ENCODE measurements at regions of chr3 and their contacts with region 1.

Region 1: DNA sequence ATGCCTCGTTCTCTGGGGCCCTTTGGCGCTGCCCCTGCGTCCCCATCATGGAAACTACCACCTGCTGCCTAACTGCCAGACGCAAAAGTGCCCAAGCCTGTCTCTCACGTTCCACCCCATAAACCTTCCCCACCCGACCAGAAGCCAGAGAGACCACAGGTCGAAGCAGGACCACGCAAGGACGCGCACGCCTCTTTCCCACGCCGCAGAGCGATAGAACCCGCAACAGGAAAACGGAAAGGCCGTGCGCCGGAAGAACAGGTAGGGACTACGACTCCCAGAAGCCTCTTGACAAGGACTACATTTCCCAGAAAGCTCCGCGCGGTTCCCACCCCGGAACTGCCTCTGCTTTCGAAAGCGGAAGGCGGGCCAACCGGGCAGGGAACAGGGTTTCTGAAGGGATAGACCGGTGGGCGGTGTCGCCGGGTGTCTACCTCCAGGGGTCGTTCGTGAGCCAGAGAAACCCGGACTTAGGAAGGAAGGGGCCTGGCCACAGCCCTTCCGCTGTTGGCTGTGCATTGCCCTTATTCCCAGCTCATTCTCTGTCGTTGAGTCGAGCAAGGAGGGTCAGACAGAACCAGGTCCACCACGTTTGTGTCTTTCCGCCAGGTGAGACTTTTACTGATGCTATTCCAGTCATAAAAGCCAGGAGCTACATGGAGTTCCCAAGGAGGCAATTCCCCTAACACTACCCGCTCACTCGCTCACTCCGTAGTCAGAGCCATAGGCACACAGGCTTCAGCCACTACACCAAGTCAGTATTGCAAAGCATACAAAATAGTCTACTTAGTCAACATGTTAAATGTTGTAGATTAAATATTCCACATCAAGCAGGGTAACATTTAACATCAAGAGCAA is 56.6 kb upstream of the ZBTB38 start:
- DNase-seq: peak; percentile 88 to 98 (median 97)
- ATAC-seq: peak; percentile 97
- H3K4me3 ChIP-seq: peak overlapping the region; percentile 80
- H3K4me3 Mint-ChIP-seq: peak overlapping the region; percentile 89 to 99 (median 97)
- H3K27ac ChIP-seq: peak overlapping the region; percentile 77
- H3K27ac Mint-ChIP-seq: peak overlapping the region; percentile 91 to 99 (median 97)
- H3K4me1 ChIP-seq: peaks cover 31 to 43% of the 10 kb centered on the region in 2 donors
- H3K4me1 Mint-ChIP-seq: peaks cover 38 to 71% (median 61%) of the 10 kb centered on the region in 7 donors
- H3K27me3 ChIP-seq: no peaks in the 10 kb centered on the region
- H3K27me3 Mint-ChIP-seq: no peaks in the 10 kb centered on the region

Region 2: GRCh38 chr3:140629357-140630139 is 682.2 kb before region 1 on chr3:
- CTCF ChIA-PET with region 1: no interaction called
- POLR2A ChIA-PET with region 1: no interaction called
- intact Hi-C with region 1: no loop called
- DNase-seq: no peak
- ATAC-seq: no peak
- H3K4me3 ChIP-seq: no peak overlapping the region
- H3K4me3 Mint-ChIP-seq: no peak overlapping the region
- H3K27ac ChIP-seq: no peak overlapping the region
- H3K27ac Mint-ChIP-seq: no peak overlapping the region
- H3K4me1 ChIP-seq: no peaks in the 10 kb centered on the region
- H3K4me1 Mint-ChIP-seq: no peaks in the 10 kb centered on the region
- H3K27me3 ChIP-seq: no peaks in the 10 kb centered on the region
- H3K27me3 Mint-ChIP-seq: no peaks in the 10 kb centered on the region

Region 3: DNA sequence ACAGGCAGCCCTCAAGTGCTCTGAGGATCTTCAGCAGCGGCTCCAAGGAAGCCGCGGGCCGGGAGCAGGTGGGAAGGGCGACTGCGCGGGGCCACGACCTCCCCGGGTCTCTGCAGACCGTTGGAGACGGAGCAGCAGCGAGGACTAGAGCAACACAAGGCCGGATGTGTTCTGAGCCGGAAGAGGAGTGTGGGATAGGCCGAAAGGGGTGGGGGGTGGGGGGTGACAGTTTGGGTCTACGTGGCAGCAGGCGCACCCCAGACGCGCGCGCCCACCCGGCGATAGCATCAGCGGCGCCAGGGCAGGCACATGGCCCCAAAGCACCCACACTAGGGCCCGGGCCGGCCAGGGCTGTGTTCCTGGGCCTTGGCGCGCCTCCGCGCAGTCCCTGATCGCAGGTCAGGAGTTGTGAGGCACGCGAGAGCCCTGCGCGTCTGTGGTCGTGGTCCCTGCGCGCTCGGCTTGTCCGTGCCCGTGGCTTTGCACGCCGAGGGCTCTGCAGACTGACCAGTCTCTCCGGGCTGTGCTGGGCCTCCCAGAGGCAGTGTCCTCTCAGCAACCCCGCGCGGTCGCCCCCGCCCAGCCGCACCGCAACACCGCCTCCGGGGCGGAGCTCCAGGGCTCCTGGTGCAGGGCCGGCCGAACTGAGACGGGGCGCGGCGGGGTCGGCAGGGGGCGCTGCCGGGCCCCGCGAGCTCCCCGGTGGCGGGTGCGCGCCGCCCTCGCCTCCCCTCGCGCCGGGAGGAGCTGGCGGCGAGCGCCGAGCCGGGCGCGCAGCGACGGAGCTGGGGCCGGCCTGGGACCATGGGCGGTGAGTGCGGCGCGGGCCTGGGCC is 80.4 kb before region 1 on chr3 and contains the start of gene PXYLP1:
- CTCF ChIA-PET with region 1: interaction called, 76 read pairs
- POLR2A ChIA-PET with region 1: interaction called, 58 read pairs
- intact Hi-C with region 1: loop called (anchors 1 kb)
- DNase-seq: peak; percentile 83 to 97 (median 91)
- ATAC-seq: peak; percentile 98
- H3K4me3 ChIP-seq: peak within 1 kb of the TSS; percentile 72
- H3K4me3 Mint-ChIP-seq: peak within 1 kb of the TSS; percentile 85 to 94 (median 92)
- H3K27ac ChIP-seq: peak within 1 kb of the TSS; percentile 85
- H3K27ac Mint-ChIP-seq: peak within 1 kb of the TSS; percentile 91 to 98 (median 98)
- H3K4me1 ChIP-seq: peaks cover 6 to 33% of the 10 kb centered on the region in 2 donors
- H3K4me1 Mint-ChIP-seq: peaks cover 50 to 66% (median 54%) of the 10 kb centered on the region in 7 donors
- H3K27me3 ChIP-seq: no peaks in the 10 kb centered on the region
- H3K27me3 Mint-ChIP-seq: peaks cover 0 to 6% (median 0%) of the 10 kb centered on the region in 5 donors
- total RNA-seq, gene PXYLP1: 18.6 to 40.9 (median 23.2) TPM

Region 4: GRCh38 chr3:141360888-141361598 is 49.3 kb after region 1 on chr3:
- CTCF ChIA-PET with region 1: interaction called, 42 read pairs
- POLR2A ChIA-PET with region 1: interaction called, 5 read pairs
- intact Hi-C with region 1: loop called in 1 of 2 experiments (anchors 2 kb)
- DNase-seq: peak in 7 of 9 donors; percentile 20 to 56 (median 45)
- ATAC-seq: peak; percentile 83
- H3K4me3 ChIP-seq: no peak overlapping the region
- H3K4me3 Mint-ChIP-seq: peak overlapping the region in 4 of 10 donors; percentile 16 to 40 (median 28)
- H3K27ac ChIP-seq: no peak overlapping the region
- H3K27ac Mint-ChIP-seq: peak overlapping the region in 2 of 9 donors; percentile 26 to 51
- H3K4me1 ChIP-seq: no peaks in the 10 kb centered on the region
- H3K4me1 Mint-ChIP-seq: peaks cover 5 to 9% (median 7%) of the 10 kb centered on the region in 7 donors
- H3K27me3 ChIP-seq: no peaks in the 10 kb centered on the region
- H3K27me3 Mint-ChIP-seq: peaks cover 0 to 11% (median 0%) of the 10 kb centered on the region in 5 donors

Region 5: DNA sequence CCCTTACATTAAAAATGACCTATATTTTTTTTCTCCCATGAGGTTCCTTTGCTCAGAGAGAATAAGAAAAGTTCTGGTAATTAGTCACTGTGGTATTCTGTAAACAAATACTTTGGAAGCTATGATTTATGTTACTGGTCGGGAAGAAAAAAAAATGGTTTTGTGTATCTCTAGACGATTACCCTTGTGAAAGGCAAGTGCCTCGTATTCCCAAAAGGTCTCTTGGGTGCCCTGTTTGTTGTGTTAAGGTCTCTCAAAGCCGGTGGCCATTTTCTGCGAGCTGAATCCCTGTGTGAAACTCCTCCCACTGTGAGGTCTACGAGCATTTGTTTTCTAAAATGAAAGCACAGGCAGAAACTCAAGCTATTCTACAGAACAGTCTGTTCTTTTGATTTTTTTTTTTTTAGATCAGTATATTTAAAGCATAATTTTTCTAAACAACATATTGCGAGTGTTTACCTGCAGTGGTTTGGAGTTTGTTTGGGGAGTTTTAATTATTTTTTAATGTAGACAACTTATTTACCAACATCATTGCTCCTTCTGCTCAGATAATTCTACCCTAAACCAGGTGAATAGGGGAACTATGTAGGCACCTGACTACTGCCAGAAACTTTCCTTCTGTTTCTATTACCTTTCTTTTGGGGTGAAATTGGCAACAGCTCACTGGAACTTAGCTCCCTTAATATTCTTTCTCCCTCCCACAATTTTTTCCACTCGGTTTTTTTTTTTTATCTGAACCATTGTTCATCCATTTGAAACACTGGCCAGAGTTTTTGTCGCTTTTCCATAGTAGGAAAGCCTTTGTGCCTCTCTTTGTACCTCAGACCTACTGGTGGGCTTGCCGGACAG is 100.6 kb after region 1 on chr3:
- CTCF ChIA-PET with region 1: interaction called, 4 read pairs
- POLR2A ChIA-PET with region 1: interaction called, 61 read pairs
- intact Hi-C with region 1: loop called (anchors 1 kb)
- DNase-seq: peak in 7 of 9 donors; percentile 54 to 76 (median 69)
- ATAC-seq: peak; percentile 78
- H3K4me3 ChIP-seq: peak overlapping the region; percentile 26
- H3K4me3 Mint-ChIP-seq: peak overlapping the region; percentile 62 to 91 (median 86)
- H3K27ac ChIP-seq: peak overlapping the region; percentile 83
- H3K27ac Mint-ChIP-seq: peak overlapping the region; percentile 96 to 100 (median 99)
- H3K4me1 ChIP-seq: peaks cover 59 to 74% of the 10 kb centered on the region in 2 donors
- H3K4me1 Mint-ChIP-seq: peaks cover 52 to 87% (median 74%) of the 10 kb centered on the region in 7 donors
- H3K27me3 ChIP-seq: no peaks in the 10 kb centered on the region
- H3K27me3 Mint-ChIP-seq: no peaks in the 10 kb centered on the region

Region 6: GRCh38 chr3:141487521-141488252 is 176.0 kb after region 1 on chr3:
- CTCF ChIA-PET with region 1: no interaction called
- POLR2A ChIA-PET with region 1: interaction called, 5 read pairs
- intact Hi-C with region 1: loop called in 1 of 2 experiments (anchors 1 kb)
- DNase-seq: peak in 8 of 9 donors; percentile 65 to 88 (median 86)
- ATAC-seq: peak; percentile 71
- H3K4me3 ChIP-seq: peak overlapping the region; percentile 65
- H3K4me3 Mint-ChIP-seq: peak overlapping the region; percentile 89 to 97 (median 92)
- H3K27ac ChIP-seq: peak overlapping the region; percentile 94
- H3K27ac Mint-ChIP-seq: peak overlapping the region; percentile 90 to 97 (median 93)
- H3K4me1 ChIP-seq: peaks cover 62% of the 10 kb centered on the region in 2 donors
- H3K4me1 Mint-ChIP-seq: peaks cover 53 to 83% (median 74%) of the 10 kb centered on the region in 7 donors
- H3K27me3 ChIP-seq: no peaks in the 10 kb centered on the region
- H3K27me3 Mint-ChIP-seq: no peaks in the 10 kb centered on the region

Region 7: GRCh38 chr3:141796081-141796888 is 484.6 kb after region 1 on chr3:
- CTCF ChIA-PET with region 1: no interaction called
- POLR2A ChIA-PET with region 1: no interaction called
- intact Hi-C with region 1: loop called (anchors 5 kb)
- DNase-seq: peak; percentile 14 to 78 (median 61)
- ATAC-seq: peak; percentile 82
- H3K4me3 ChIP-seq: peak overlapping the region; percentile 68
- H3K4me3 Mint-ChIP-seq: peak overlapping the region; percentile 86 to 97 (median 90)
- H3K27ac ChIP-seq: peak overlapping the region; percentile 79
- H3K27ac Mint-ChIP-seq: peak overlapping the region; percentile 92 to 99 (median 97)
- H3K4me1 ChIP-seq: peaks cover 48 to 56% of the 10 kb centered on the region in 2 donors
- H3K4me1 Mint-ChIP-seq: peaks cover 45 to 71% (median 60%) of the 10 kb centered on the region in 7 donors
- H3K27me3 ChIP-seq: no peaks in the 10 kb centered on the region
- H3K27me3 Mint-ChIP-seq: peaks cover 0 to 2% (median 0%) of the 10 kb centered on the region in 5 donors

Measured in naive thymus-derived CD4-positive, alpha-beta T cell (primary cell).